ENCODE measurements at regions of chr4 and their contacts with region 1.

Region 1: DNA sequence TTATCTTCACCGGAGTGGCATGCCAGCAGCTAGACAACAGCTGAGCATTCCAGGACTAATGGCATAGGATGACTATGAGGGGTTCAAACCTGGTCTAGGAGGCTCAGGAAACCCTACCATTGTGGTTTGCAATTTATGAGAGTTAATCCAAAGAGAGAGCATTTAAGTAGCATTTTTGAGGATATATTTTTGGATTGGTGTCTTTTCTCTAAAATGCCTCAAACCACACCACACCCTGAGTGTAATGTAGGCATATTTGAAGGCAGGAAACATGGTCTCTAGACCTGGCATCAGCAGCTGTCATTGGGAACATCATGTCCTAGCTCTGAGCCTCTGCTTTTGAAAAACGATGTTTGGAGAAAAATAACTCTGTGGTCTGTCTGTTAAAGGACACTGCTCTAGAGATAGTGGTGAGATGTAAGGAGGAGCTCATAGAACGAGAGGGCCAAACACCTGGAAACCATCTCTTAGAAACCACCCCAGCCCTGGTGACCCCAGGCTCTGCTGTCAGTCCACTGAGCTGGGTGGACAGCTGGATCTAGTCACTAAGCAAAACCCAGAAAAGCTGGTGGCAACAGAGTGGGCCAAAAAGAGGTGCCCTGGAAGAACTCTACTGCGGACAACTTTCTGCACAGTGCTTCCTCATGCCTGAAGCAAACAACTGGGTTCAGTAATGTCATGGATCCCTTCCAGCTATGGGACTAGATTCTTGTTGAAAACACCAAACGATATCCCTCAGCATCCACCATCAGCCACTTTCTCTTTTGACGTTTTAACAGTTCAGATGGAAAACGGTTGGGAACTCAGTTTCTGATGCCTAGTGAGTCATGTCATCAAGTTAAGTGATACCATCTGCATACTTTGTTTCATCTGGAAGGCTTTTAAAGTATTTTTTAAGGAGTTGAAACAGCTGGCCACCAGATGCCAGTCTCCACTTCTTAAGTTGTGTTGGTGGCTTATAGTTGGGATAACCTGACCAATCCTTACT is 100.2 kb upstream of the C1QTNF7 start:
- DNase-seq: no peak
- ATAC-seq: no peak
- H3K4me3 ChIP-seq: no peak overlapping the region
- H3K27ac ChIP-seq: no peak overlapping the region
- H3K4me1 ChIP-seq: no peaks in the 10 kb centered on the region
- H3K27me3 ChIP-seq: no peaks in the 10 kb centered on the region
- CTCF ChIP-seq: no peak

Region 2: DNA sequence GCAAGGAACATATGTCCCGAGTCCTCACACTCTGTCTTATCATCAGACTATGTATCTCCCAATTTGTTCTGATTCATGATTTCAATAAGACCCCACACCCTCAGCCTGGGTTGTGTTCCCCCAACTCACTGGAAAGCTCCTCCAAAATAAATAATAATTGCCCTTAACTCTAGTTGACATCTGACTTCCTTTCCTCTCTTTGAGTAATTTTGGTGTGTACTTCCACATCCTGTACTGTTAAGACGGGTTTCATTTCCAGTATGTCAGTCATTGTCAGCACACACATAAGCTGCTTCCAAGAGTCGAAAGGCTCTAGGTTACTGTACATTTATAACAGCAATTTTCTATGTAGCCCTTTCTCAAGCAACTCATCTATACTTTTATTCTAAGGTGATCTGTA is 48.1 kb after region 1 on chr4:
- CTCF ChIA-PET with region 1: no interaction called
- POLR2A ChIA-PET with region 1: no interaction called
- in situ Hi-C with region 1: no loop called
- intact Hi-C with region 1: loop called (anchors 10 kb)
- DNase-seq: no peak
- ATAC-seq: no peak
- H3K4me3 ChIP-seq: no peak overlapping the region
- H3K27ac ChIP-seq: no peak overlapping the region
- H3K4me1 ChIP-seq: no peaks in the 10 kb centered on the region
- H3K27me3 ChIP-seq: no peaks in the 10 kb centered on the region
- CTCF ChIP-seq: no peak

Measured in Panc1 (cell line).